ENCODE measurements at regions of chr9 and their contacts with region 1.

Region 1: GRCh38 chr9:93295031-93295430 is 111.1 kb downstream of the WNK2 start:
- DNase-seq: no peak
- ATAC-seq: no peak
- H3K4me3 Mint-ChIP-seq: no peak overlapping the region
- H3K27ac Mint-ChIP-seq: no peak overlapping the region
- H3K4me1 Mint-ChIP-seq: peaks cover 12% of the 10 kb centered on the region
- H3K27me3 Mint-ChIP-seq: peaks cover 13% of the 10 kb centered on the region
- CTCF ChIP-seq: no peak

Region 2: GRCh38 chr9:93280661-93281259 is 14.3 kb before region 1 on chr9:
- CTCF ChIA-PET with region 1: no interaction called
- POLR2A ChIA-PET with region 1: no interaction called
- intact Hi-C with region 1: loop called (anchors 2 kb)
- DNase-seq: no peak
- ATAC-seq: no peak
- H3K4me3 Mint-ChIP-seq: no peak overlapping the region
- H3K27ac Mint-ChIP-seq: no peak overlapping the region
- H3K4me1 Mint-ChIP-seq: peaks cover 19% of the 10 kb centered on the region
- H3K27me3 Mint-ChIP-seq: peaks cover 64% of the 10 kb centered on the region
- CTCF ChIP-seq: no peak